HepG2 (cell line): ENCODE measurements at regions of chr15 and their contacts with region 1.

Region 1: DNA sequence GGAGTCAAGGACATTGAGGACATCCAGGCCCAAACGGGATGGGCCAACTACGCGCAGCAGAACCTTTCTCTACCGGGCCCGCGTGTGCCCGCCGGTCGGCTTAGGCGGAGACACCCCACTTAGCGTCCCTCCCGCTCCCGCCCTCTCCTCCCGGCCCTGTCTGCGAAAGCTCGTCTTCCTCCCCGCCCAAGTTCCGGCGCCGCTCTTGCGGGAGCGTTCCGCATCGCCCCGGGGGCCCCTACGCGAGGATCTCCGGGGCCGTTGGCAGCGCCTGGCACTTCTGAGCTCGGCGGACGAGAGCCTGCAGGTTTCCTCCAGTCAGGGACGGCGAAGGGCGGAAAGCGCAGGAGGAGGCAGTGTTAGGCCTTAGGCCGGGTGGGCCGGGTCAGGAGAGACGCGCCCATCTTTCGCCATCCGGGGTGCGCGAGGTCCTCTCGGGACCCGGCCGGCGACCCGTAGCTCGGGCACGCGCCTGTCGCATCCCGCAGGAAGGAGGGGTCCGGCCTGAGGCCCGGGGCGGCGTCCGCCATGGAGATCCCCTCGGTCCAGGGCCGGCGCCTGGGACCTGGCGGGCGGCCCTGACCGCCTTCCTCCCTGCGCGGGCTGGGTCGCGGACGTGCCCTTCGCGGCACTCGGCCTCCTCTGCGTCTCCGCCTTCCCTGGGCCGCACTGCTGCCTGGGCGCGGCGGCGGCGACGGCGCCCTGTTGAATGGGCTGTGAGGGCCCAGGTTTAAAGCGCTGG is at the start of gene FEM1B:
- DNase-seq: peak; percentile 83
- ATAC-seq: peak; percentile 85
- H3K4me3 ChIP-seq: peak within 1 kb of the TSS; percentile 92 to 99 (median 98)
- H3K27ac ChIP-seq: peak within 1 kb of the TSS; percentile 97
- H3K4me1 ChIP-seq: peaks cover 76% of the 10 kb centered on the region
- H3K27me3 ChIP-seq: no peaks in the 10 kb centered on the region; a peak in 1 of 5 replicates
- CTCF ChIP-seq: no peak; the same call in 1 of the 2 replicates
- EP300 ChIP-seq: peak; percentile 27 to 54; a peak in 1 of 4 replicates
- POLR2A ChIP-seq: peak; percentile 71 to 76
- RAD21 ChIP-seq: peak; percentile 63
- total RNA-seq, gene FEM1B: 38.1 and 41.2 TPM in 2 replicates

Region 2: GRCh38 chr15:68145706-68146105 is 132.1 kb before region 1 on chr15:
- CTCF ChIA-PET with region 1: no interaction called
- POLR2A ChIA-PET with region 1: no interaction called
- in situ Hi-C with region 1: no loop called
- intact Hi-C with region 1: no loop called
- DNase-seq: no peak
- ATAC-seq: no peak
- H3K4me3 ChIP-seq: no peak overlapping the region
- H3K27ac ChIP-seq: no peak overlapping the region
- H3K4me1 ChIP-seq: no peaks in the 10 kb centered on the region
- H3K27me3 ChIP-seq: no peaks in the 10 kb centered on the region
- CTCF ChIP-seq: no peak
- EP300 ChIP-seq: no peak
- POLR2A ChIP-seq: no peak
- RAD21 ChIP-seq: no peak

Region 3: GRCh38 chr15:68229386-68230156 is 48.2 kb before region 1 on chr15 and contains the start of gene CLN6:
- CTCF ChIA-PET with region 1: no interaction called
- POLR2A ChIA-PET with region 1: interaction called, 18 read pairs
- in situ Hi-C with region 1: no loop called
- intact Hi-C with region 1: loop called (anchors 5 kb)
- DNase-seq: peak; percentile 59
- ATAC-seq: peak; percentile 82
- H3K4me3 ChIP-seq: peak within 1 kb of the TSS; percentile 60 to 82 (median 78)
- H3K27ac ChIP-seq: peak within 1 kb of the TSS; percentile 89
- H3K4me1 ChIP-seq: peaks cover 75% of the 10 kb centered on the region
- H3K27me3 ChIP-seq: peaks cover 0 to 7% of the 10 kb centered on the region in 2 experiments; a peak in 1 of 5 replicates
- CTCF ChIP-seq: no peak; the same call in 1 of the 2 replicates
- EP300 ChIP-seq: no peak; a peak in 1 of 4 replicates
- POLR2A ChIP-seq: peak; percentile 61 to 70; a peak in 3 of 4 replicates
- RAD21 ChIP-seq: peak; percentile 42; the same call in 1 of the 2 replicates
- total RNA-seq, gene CLN6: 11.1 and 27.1 TPM in 2 replicates

Region 4: GRCh38 chr15:68252925-68253534 is 24.7 kb before region 1 on chr15:
- CTCF ChIA-PET with region 1: no interaction called
- POLR2A ChIA-PET with region 1: interaction called, 10 read pairs
- in situ Hi-C with region 1: no loop called
- intact Hi-C with region 1: no loop called
- DNase-seq: peak; percentile 72
- ATAC-seq: peak; percentile 61
- H3K4me3 ChIP-seq: no peak overlapping the region; a peak in 1 of 6 replicates
- H3K27ac ChIP-seq: no peak overlapping the region
- H3K4me1 ChIP-seq: peaks cover 7% of the 10 kb centered on the region
- H3K27me3 ChIP-seq: 0 out of 5 replicates have a peak, but pooled peaks cover 0 to 6% of the 10 kb centered on the region in 2 experiments
- CTCF ChIP-seq: peak; percentile 86
- EP300 ChIP-seq: no peak
- POLR2A ChIP-seq: no peak
- RAD21 ChIP-seq: peak; percentile 81

Region 5: GRCh38 chr15:68298882-68299381 is 21.2 kb after region 1 on chr15:
- CTCF ChIA-PET with region 1: no interaction called
- POLR2A ChIA-PET with region 1: interaction called, 51 read pairs
- in situ Hi-C with region 1: no loop called
- intact Hi-C with region 1: no loop called
- DNase-seq: no peak
- ATAC-seq: peak; percentile 18; the same call in 2 of the 3 replicates
- H3K4me3 ChIP-seq: peak overlapping the region in 2 of 3 experiments; percentile 36 to 39; a peak in 4 of 6 replicates
- H3K27ac ChIP-seq: peak overlapping the region; percentile 56
- H3K4me1 ChIP-seq: peaks cover 57% of the 10 kb centered on the region
- H3K27me3 ChIP-seq: no peaks in the 10 kb centered on the region
- CTCF ChIP-seq: no peak
- EP300 ChIP-seq: no peak
- POLR2A ChIP-seq: no peak
- RAD21 ChIP-seq: no peak